ENCODE measurements at regions of chr3 and their contacts with region 1.

Region 1: DNA sequence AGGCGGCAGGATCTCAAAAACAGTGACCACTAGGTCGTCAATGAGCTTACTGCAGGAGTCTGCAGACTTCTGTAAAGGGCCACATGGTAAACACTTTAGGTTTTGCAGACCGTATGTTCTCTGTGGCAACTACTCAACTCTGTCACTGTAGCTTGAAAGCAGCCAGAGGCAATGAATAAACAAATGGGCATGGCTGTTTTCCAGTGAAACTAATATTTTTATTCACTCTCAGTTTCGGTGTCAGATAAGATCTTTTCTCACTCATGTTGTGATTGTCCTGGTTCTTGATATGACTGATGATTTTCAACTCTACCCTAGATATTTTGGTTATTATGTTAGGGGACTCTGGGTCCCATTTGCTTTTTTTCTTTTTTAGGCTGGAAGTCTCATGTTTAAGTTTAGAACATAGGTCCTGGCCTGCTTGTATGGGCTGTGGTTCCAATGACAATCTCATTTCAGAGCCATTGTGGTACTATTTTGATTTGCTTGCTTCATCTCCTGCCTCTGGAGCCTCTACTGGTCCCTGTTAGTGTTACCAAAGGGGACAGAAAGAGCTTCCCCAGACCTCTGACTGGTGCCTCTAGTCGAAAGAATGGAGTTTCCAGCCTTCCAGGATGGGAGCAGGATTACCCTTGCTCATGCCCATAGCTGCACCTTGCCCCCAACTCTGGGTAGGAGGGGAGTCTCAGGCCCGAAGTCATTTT is 222.0 kb downstream of the STT3B start:
- DNase-seq: peak; percentile 65
- H3K4me3 Mint-ChIP-seq: peak overlapping the region; percentile 68
- H3K27ac Mint-ChIP-seq: peak overlapping the region; percentile 95
- H3K4me1 Mint-ChIP-seq: peaks cover 49% of the 10 kb centered on the region
- H3K27me3 Mint-ChIP-seq: no peaks in the 10 kb centered on the region

Region 2: DNA sequence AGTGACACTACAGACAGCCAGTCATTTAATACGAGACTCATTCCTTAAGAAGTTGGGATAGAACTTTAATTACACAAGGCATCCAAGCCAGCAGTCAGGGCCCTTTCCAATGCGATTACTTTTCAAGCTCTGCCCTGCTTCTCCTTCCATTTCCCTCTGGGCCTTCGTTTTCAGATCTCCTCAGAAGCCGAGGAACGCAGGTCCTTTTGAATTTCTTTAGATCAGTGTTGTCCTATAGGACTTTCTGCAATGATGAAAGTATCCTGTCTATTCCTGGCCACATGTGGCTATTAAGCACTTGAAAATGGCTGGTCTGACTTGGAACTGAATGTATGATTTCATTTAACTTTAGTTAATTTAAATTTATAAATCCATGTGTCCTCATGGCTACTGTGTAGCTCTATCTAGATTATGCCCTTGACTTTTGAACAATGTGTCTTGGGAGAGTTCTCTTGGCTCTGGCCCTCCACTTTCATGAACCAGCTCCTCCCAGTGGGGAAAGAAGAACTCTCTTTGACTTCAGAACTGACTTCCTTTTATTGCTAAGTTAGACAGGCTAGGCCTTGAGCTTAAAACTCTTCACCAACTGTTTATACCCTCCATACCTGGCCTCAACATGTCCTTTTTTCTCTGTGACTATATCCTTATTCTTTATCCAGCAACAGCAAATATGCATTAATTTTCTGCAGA is 1125.7 kb before region 1 on chr3:
- intact Hi-C with region 1: loop called (anchors 10 kb)
- DNase-seq: peak; percentile 80
- H3K4me3 Mint-ChIP-seq: peak overlapping the region; percentile 57
- H3K27ac Mint-ChIP-seq: peak overlapping the region; percentile 99
- H3K4me1 Mint-ChIP-seq: peaks cover 76% of the 10 kb centered on the region
- H3K27me3 Mint-ChIP-seq: no peaks in the 10 kb centered on the region

Region 3: DNA sequence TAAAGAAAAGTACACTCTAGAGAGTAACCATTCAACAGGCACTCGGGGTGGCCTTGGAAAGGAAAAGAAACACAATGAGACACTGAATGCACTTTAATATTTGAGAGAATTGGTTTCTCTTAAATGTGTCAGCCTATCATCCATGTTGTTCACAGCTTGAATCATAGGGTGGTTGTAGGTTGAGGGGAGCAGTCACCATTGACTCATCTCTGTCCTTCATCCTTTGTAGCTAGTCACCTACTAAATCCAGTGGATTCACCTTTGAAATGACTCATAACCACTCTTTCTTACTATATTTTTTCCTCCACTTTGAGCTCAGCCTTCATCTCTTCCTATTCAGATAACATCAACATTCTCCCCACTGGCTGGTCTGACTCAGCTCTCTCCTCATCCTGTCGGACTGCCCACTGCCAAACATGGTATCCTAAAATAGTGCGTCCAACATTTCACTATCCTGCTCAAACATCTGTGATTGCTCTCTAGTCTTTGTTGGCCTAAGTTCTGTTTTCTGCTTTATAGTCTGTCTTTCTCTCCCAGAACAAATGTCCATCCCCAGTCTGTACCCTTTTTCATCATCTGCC is 677.6 kb before region 1 on chr3:
- intact Hi-C with region 1: loop called (anchors 2 kb)
- DNase-seq: peak; percentile 79
- H3K4me3 Mint-ChIP-seq: peak overlapping the region; percentile 22
- H3K27ac Mint-ChIP-seq: peak overlapping the region; percentile 83
- H3K4me1 Mint-ChIP-seq: peaks cover 32% of the 10 kb centered on the region
- H3K27me3 Mint-ChIP-seq: no peaks in the 10 kb centered on the region

Region 4: DNA sequence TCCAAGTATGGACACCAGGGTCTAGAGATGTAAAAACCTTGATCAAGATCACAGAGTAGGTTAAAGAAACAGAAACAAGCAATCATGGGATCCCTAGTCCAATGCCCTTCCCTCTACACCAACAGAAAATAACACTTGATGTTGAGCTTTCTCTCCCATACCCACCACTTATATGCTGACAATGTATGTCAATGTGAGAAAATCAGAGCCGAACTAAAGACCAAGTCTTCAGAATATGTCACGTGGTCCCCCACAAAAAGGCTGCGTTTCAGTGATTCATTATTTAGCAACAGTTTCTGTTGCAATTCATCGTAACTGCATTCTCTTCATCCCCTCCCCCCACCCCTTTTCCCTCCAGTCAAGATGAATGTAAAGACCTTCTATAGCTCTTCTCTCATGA is 500.9 kb before region 1 on chr3:
- intact Hi-C with region 1: loop called (anchors 2 kb)
- DNase-seq: no peak
- H3K4me3 Mint-ChIP-seq: peak overlapping the region; percentile 61
- H3K27ac Mint-ChIP-seq: peak overlapping the region; percentile 93
- H3K4me1 Mint-ChIP-seq: peaks cover 51% of the 10 kb centered on the region
- H3K27me3 Mint-ChIP-seq: no peaks in the 10 kb centered on the region

Region 5: GRCh38 chr3:31634481-31634880 is 120.2 kb before region 1 on chr3:
- intact Hi-C with region 1: loop called (anchors 1 kb)
- DNase-seq: no peak
- H3K4me3 Mint-ChIP-seq: no peak overlapping the region
- H3K27ac Mint-ChIP-seq: peak overlapping the region; percentile 9
- H3K4me1 Mint-ChIP-seq: peaks cover 26% of the 10 kb centered on the region
- H3K27me3 Mint-ChIP-seq: no peaks in the 10 kb centered on the region

Region 6: GRCh38 chr3:31768479-31769123 is 13.9 kb after region 1 on chr3:
- intact Hi-C with region 1: loop called (anchors 1 kb)
- DNase-seq: peak; percentile 88
- H3K4me3 Mint-ChIP-seq: peak overlapping the region; percentile 9
- H3K27ac Mint-ChIP-seq: no peak overlapping the region
- H3K4me1 Mint-ChIP-seq: peaks cover 54% of the 10 kb centered on the region
- H3K27me3 Mint-ChIP-seq: no peaks in the 10 kb centered on the region

Region 7: GRCh38 chr3:31981206-31982181 is 226.8 kb after region 1 on chr3 and contains the starts of genes OSBPL10 and ZNF860:
- intact Hi-C with region 1: loop called (anchors 1 kb)
- DNase-seq: peak; percentile 72
- H3K4me3 Mint-ChIP-seq: peak within 1 kb of the TSS; percentile 88
- H3K27ac Mint-ChIP-seq: peak within 1 kb of the TSS; percentile 74
- H3K4me1 Mint-ChIP-seq: peaks cover 28% of the 10 kb centered on the region
- H3K27me3 Mint-ChIP-seq: peaks cover 19% of the 10 kb centered on the region
- total RNA-seq, gene OSBPL10: 14.5 and 14.9 TPM in 2 replicates
- total RNA-seq, gene ZNF860: 0.19 and 0.33 TPM in 2 replicates